Activated CD4-positive, alpha-beta T cell treated with anti-CD3 and anti-CD28 coated beads for 36 hours (primary cell): ENCODE measurements at regions of chr14 and their contacts with region 1.

Region 1: DNA sequence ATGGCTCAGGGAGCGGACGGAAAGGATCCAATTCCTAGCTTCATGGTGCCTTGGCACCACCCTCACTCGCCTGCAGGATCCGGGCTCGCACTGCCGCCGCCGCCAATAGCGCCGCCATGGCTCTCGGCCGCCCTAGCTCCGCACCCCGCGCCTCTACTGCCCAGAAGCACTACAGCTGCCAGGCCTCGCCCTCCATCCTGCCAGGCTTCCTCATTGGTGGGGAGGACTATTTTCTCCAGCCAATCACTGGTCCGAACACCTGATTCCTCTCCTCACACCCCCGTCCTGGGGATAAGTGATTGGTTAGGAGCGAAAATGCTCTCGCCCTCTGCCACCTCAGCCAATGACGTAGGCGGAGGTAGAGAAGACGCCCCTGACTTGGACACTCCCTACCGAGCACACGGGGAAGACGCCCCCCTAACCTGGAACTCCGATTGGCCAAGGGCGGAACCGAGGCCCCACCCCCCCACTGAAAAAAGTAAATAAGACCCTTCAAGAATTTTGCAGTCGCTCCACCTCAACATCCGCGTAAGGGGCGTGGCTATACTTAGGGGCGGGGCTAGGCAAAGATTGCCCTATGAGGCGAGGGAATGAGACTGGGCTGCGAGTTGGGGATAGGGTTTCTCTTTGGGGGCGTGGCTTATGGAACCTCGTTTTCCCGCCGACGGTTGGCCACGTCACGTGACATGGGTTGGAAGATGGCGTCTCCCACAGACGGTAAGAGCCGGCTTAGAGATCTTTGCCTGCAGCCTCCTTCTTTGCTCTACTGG is at the starts of genes ALDH6A1 and LIN52:
- DNase-seq: peak; percentile 99
- ATAC-seq: peak; percentile 93
- H3K4me3 Mint-ChIP-seq: peak within 1 kb of the TSS; percentile 95
- H3K27ac Mint-ChIP-seq: peak within 1 kb of the TSS; percentile 95
- H3K4me1 Mint-ChIP-seq: peaks cover 31% of the 10 kb centered on the region
- H3K27me3 Mint-ChIP-seq: no peaks in the 10 kb centered on the region
- total RNA-seq, gene ALDH6A1: 17.2 to 24.6 TPM
- total RNA-seq, gene LIN52: 10.3 to 13.2 TPM

Region 2: DNA sequence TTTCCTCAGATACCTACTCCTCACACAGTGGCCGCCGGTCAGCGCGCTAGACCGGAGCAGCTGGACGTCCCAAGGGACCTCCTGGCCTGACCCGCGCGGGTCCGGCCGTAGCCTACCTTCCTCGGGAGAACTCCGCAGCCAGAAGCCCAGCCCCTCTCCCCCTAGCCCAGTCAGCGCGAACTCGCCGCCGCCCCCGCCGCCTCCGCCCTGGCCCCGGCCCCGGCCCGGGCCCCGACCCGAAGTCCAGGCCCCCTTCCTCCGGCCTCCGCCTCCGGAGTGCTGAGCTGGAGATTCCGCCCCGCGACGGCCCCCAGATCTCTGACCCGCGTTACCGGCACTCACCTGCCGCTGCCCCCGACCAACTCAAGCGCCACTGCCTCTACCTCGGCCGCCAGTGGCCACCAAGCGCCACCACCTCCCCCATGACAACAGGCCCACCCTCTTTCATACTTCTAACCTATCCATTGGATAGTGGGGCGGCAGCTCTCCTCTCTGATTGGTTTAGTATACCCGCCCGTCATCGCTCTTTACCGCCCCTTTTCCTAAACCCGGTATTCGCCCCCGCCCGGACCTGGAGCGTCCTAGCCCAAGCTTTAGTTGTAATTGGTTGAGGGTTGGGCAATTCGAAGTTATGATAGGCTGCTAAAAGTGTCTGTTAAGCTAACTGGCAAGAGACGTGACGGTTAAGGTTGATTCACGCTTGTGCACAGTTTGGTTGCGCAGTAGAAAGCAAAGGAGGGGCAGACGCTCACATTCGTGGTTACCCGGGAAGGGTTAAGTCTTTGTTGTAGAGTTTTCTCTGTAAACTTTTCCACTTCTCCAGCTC is 626.1 kb before region 1 on chr14 and contains the start of gene NUMB:
- CTCF ChIA-PET with region 1: no interaction called
- POLR2A ChIA-PET with region 1: interaction called, 3 read pairs
- intact Hi-C with region 1: loop called in 1 of 2 experiments (anchors 1 kb)
- DNase-seq: peak; percentile 98
- ATAC-seq: peak; percentile 97
- H3K4me3 Mint-ChIP-seq: peak within 1 kb of the TSS; percentile 95
- H3K27ac Mint-ChIP-seq: peak within 1 kb of the TSS; percentile 96
- H3K4me1 Mint-ChIP-seq: peaks cover 45% of the 10 kb centered on the region
- H3K27me3 Mint-ChIP-seq: no peaks in the 10 kb centered on the region
- total RNA-seq, gene NUMB: 35.7 to 54.9 TPM

Region 3: GRCh38 chr14:73713803-73714655 is 370.4 kb before region 1 on chr14 and contains the start of gene PNMA1:
- CTCF ChIA-PET with region 1: no interaction called
- POLR2A ChIA-PET with region 1: no interaction called
- intact Hi-C with region 1: loop called in 1 of 2 experiments (anchors 2 kb)
- DNase-seq: peak; percentile 92
- ATAC-seq: peak; percentile 79
- H3K4me3 Mint-ChIP-seq: peak within 1 kb of the TSS; percentile 98
- H3K27ac Mint-ChIP-seq: peak within 1 kb of the TSS; percentile 94
- H3K4me1 Mint-ChIP-seq: peaks cover 13% of the 10 kb centered on the region
- H3K27me3 Mint-ChIP-seq: no peaks in the 10 kb centered on the region
- total RNA-seq, gene PNMA1: 23.2 to 28.8 TPM

Region 4: DNA sequence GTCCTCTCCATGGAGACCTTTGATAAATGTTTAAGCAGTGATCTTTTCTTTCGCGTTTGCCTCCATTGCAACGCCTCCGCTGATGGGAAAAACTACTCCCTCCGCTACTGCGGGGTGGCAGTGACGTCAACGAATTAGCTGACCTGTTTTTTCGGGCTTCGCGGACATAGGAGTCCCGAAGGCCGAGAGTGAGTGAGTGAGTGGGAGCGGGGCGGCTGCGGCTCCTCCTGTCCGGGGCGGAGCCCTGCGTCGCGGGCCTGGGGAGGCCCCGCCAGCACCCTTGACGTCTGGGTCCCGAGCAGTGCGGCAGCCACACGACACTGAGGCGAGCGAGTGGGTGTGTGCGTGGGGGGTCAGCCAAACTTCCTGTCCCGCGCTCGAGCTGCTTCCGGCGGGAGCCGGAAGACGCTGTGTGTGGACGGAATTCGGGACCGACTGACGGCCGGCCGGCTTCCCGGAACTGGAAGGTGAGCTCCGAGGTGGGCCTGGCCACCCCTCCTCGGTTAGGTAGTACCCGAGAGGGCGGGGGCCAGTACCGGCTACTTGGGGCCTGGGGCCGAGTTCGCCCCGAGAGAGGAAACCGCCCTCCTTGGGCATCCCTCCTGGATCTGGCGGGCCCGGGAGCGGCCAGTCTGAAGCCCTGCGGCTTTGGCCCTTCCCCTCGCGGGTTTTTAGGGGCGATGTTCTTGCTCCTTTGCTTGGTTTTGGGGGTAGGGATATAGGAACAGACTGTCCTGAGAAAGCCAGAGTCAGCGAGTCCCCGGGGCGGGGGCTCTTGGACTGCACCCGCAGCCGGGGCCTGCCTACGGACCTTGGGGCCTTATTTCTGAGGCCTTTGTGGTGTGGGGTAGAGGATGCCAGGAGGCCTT is 197.8 kb before region 1 on chr14 and contains the start of gene ZNF410:
- CTCF ChIA-PET with region 1: no interaction called
- POLR2A ChIA-PET with region 1: interaction called, 3 read pairs
- intact Hi-C with region 1: loop called in 1 of 2 experiments (anchors 1 kb)
- DNase-seq: peak; percentile 97
- ATAC-seq: peak; percentile 100
- H3K4me3 Mint-ChIP-seq: peak within 1 kb of the TSS; percentile 80
- H3K27ac Mint-ChIP-seq: peak within 1 kb of the TSS; percentile 99
- H3K4me1 Mint-ChIP-seq: peaks cover 43% of the 10 kb centered on the region
- H3K27me3 Mint-ChIP-seq: no peaks in the 10 kb centered on the region
- total RNA-seq, gene ZNF410: 58.6 to 66.2 TPM

Region 5: GRCh38 chr14:73944432-73945186 is 139.9 kb before region 1 on chr14:
- CTCF ChIA-PET with region 1: no interaction called
- POLR2A ChIA-PET with region 1: no interaction called
- intact Hi-C with region 1: no loop called
- DNase-seq: no peak
- ATAC-seq: no peak
- H3K4me3 Mint-ChIP-seq: no peak overlapping the region
- H3K27ac Mint-ChIP-seq: no peak overlapping the region
- H3K4me1 Mint-ChIP-seq: peaks cover 3% of the 10 kb centered on the region
- H3K27me3 Mint-ChIP-seq: no peaks in the 10 kb centered on the region

Region 6: GRCh38 chr14:74257078-74257989 is 172.9 kb after region 1 on chr14:
- CTCF ChIA-PET with region 1: interaction called, 3 read pairs
- POLR2A ChIA-PET with region 1: no interaction called
- intact Hi-C with region 1: loop called in 1 of 2 experiments (anchors 1 kb)
- DNase-seq: peak; percentile 77
- ATAC-seq: peak; percentile 89
- H3K4me3 Mint-ChIP-seq: peak overlapping the region; percentile 69
- H3K27ac Mint-ChIP-seq: peak overlapping the region; percentile 42
- H3K4me1 Mint-ChIP-seq: peaks cover 7% of the 10 kb centered on the region
- H3K27me3 Mint-ChIP-seq: peaks cover 3% of the 10 kb centered on the region

Region 7: GRCh38 chr14:74762917-74763802 is 678.7 kb after region 1 on chr14 and contains the start of gene YLPM1:
- CTCF ChIA-PET with region 1: no interaction called
- POLR2A ChIA-PET with region 1: no interaction called
- intact Hi-C with region 1: loop called in 1 of 2 experiments (anchors 2 kb)
- DNase-seq: peak; percentile 95
- ATAC-seq: peak; percentile 92
- H3K4me3 Mint-ChIP-seq: peak within 1 kb of the TSS; percentile 96
- H3K27ac Mint-ChIP-seq: peak within 1 kb of the TSS; percentile 97
- H3K4me1 Mint-ChIP-seq: peaks cover 42% of the 10 kb centered on the region
- H3K27me3 Mint-ChIP-seq: no peaks in the 10 kb centered on the region
- total RNA-seq, gene YLPM1: 53.0 to 60.9 TPM